Dorsolateral prefrontal cortex (tissue), 120 donors: ENCODE measurements at regions of chr6 and their contacts with region 1.

Region 1: DNA sequence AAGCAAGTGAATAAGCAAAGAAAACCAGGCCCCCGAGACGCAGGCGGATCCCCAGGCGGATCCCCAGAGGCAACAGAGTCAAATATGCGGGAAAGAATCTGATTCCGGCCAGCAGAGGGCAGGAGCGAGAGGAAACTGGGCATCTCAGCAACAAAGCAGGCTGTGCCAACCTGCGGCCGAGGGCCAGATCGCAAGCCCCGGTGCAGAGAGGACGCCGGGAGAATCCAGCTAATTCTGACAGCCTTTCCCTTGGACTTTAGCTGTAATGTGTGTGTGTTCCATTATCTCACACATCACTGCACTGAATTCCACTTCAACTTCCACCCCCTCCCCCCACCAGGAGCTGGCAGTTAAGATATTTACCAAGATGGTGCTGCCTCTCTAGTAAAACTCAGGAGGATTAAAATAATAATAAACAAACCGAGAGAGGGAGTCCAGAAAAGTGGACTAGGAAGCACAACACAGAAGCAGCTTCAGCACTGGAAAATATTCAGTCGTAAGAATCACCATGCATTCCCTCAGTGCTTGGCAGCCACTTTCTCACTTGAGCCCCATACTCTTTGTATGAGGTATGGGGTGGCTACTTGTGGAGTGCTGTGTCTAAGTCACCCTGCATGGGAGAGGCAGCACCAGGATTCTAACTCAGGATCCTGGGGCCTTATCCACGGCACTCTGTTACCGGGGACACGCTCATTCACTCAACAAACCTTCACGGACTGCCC is 66.2 kb upstream of the SNX9 start:
- DNase-seq: peak; percentile 80 to 94 (median 92)
- H3K4me3 ChIP-seq: peak overlapping the region in 35 of 59 donors; percentile 1 to 50 (median 26)
- H3K27ac ChIP-seq: peak overlapping the region in 43 of 59 donors; percentile 5 to 81 (median 57)
- H3K27me3 ChIP-seq: no peaks in the 10 kb centered on the region
- CTCF ChIP-seq: peak; percentile 83 to 97 (median 90)

Region 2: GRCh38 chr6:157323255-157323965 is 433.5 kb before region 1 on chr6 and contains the start of gene TMEM242:
- intact Hi-C with region 1: loop called (anchors 5 to 10 kb)
- DNase-seq: peak; percentile 83 to 94 (median 90)
- H3K4me3 ChIP-seq: peak within 1 kb of the TSS; percentile 61 to 99 (median 90)
- H3K27ac ChIP-seq: peak within 1 kb of the TSS; percentile 73 to 99 (median 93)
- H3K27me3 ChIP-seq: no peaks in the 10 kb centered on the region
- CTCF ChIP-seq: peak in 50 of 56 donors; percentile 1 to 67 (median 48)
- total RNA-seq, gene TMEM242: 10.7 to 28.5 (median 20.7) TPM

Region 3: DNA sequence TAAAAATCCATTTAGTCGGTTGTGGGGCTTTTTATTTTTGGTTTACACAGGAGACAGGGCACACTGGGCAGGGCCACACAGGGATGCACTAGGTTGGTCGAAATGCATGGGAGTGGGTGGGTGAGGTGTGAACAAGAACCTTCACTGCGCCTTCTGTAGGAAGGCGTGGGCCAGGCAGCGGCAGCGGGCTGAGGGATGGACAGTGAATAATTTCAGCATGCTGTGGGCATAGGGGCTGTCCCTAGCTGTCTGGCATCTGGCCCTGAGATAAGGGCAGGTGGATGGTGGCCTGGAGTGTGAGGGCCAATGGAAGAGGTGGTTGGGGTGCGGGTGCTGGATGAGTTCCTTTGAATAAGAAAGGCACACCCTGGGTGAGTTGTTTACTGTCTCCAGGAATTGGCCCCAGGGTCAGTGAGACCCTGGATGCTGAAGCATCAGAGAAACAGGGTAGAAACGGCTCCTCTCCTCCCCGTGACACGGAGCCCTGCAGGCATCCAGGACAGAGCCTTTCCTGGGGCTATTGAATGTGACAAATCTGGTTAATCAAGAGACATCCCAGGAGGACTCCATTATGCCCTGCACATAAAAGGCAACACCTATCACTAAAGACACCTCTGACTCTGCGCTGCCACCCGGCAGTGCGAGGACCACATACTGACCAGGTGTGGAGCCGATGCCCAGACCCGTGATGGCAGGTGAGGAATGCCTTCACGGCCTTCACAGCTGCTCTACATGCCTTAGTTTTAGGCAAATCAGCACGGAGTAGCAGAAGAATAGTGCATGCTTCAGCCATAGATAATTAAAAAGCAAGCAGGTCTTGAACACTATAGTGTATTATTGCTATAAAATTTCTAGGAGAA is 56.9 kb before region 1 on chr6:
- intact Hi-C with region 1: no loop called
- DNase-seq: no peak
- H3K4me3 ChIP-seq: no peak overlapping the region
- H3K27ac ChIP-seq: no peak overlapping the region
- H3K27me3 ChIP-seq: no peaks in the 10 kb centered on the region
- CTCF ChIP-seq: no peak

Region 4: GRCh38 chr6:157823001-157823527 is 66.2 kb after region 1 on chr6 and contains the start of gene SNX9:
- intact Hi-C with region 1: loop called (anchors 5 kb)
- DNase-seq: peak; percentile 45 to 83 (median 70)
- H3K4me3 ChIP-seq: peak within 1 kb of the TSS; percentile 57 to 98 (median 90)
- H3K27ac ChIP-seq: peak within 1 kb of the TSS; percentile 90 to 99 (median 96)
- H3K27me3 ChIP-seq: no peaks in the 10 kb centered on the region
- CTCF ChIP-seq: peak in 2 of 56 donors; percentile 6 to 14
- total RNA-seq, gene SNX9: 21.2 to 46.1 (median 28.8) TPM

Region 5: GRCh38 chr6:157879873-157880254 is 123.0 kb after region 1 on chr6:
- intact Hi-C with region 1: loop called in 1 of 2 experiments (anchors 5 kb)
- DNase-seq: peak in 1 of 10 donors; percentile 58
- H3K4me3 ChIP-seq: peak overlapping the region in 2 of 59 donors; percentile 13 to 18
- H3K27ac ChIP-seq: peak overlapping the region in 58 of 59 donors; percentile 13 to 96 (median 81)
- H3K27me3 ChIP-seq: no peaks in the 10 kb centered on the region
- CTCF ChIP-seq: peak in 1 of 56 donors; percentile 6

Region 6: GRCh38 chr6:157946865-157947532 is 190.1 kb after region 1 on chr6:
- intact Hi-C with region 1: loop called (anchors 2 kb)
- DNase-seq: peak in 1 of 10 donors; percentile 58
- H3K4me3 ChIP-seq: no peak overlapping the region
- H3K27ac ChIP-seq: peak overlapping the region in 48 of 59 donors; percentile 9 to 100 (median 61)
- H3K27me3 ChIP-seq: no peaks in the 10 kb centered on the region
- CTCF ChIP-seq: peak; percentile 22 to 88 (median 71)